A549 (cell line): ENCODE measurements at regions of chr2 and their contacts with region 1.

Region 1: GRCh38 chr2:45169339-45170190 is 160.3 kb upstream of the SIX2 start:
- DNase-seq: peak; percentile 51 to 60
- ATAC-seq: peak; percentile 77 to 79
- H3K4me3 ChIP-seq: peak overlapping the region; percentile 78
- H3K27ac ChIP-seq: peak overlapping the region; percentile 86 to 93
- H3K4me1 ChIP-seq: peaks cover 29% of the 10 kb centered on the region
- CTCF ChIP-seq: peak; percentile 18; the same call in 2 of the 3 replicates
- EP300 ChIP-seq: no peak
- POLR2A ChIP-seq: peak; percentile 29
- RAD21 ChIP-seq: peak in 1 of 2 experiments; percentile 27; a peak in 1 of 5 replicates

Region 2: DNA sequence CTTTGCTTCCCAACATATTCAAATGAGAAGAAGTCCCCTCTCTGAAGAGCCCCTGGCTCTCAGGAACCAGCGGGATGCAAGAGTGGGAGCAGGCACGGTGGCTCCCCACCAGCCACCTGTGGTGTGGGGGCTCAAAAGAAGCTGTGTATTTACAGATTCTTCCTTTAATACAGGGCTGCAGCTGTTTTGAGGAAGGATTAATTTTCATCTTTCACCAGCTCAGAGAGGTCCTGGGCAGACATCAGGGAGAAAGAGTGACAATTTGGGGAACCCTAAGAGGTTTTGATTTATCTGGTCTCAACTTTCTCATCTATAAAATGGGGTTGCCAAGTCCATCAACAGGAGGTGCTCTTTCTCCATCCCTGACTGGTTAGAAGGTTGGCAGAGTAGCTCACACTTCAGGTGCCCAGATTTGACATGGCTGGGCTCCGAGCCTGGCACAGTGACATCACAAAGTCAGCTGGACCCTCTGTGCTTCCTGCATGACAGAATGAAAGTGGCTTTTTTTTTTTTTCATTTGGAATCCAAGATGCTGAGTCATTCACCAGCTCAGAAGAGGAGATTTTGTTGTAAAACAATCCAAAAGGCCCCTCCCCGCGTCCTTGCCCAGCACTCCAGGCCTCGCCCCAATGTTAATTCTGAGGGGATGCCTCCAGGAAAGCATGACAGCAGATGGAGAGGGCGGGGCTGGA is 144.8 kb before region 1 on chr2:
- CTCF ChIA-PET with region 1: interaction called, 7 read pairs
- POLR2A ChIA-PET with region 1: interaction called, 10 read pairs
- DNase-seq: peak; percentile 72 to 89
- ATAC-seq: peak; percentile 73 to 85
- H3K4me3 ChIP-seq: no peak overlapping the region
- H3K27ac ChIP-seq: peak overlapping the region; percentile 50 to 82
- H3K4me1 ChIP-seq: peaks cover 18% of the 10 kb centered on the region
- CTCF ChIP-seq: peak; percentile 70
- EP300 ChIP-seq: no peak
- POLR2A ChIP-seq: no peak
- RAD21 ChIP-seq: peak; percentile 63 to 77

Region 3: GRCh38 chr2:45128580-45128997 is 41.0 kb before region 1 on chr2:
- CTCF ChIA-PET with region 1: interaction called, 4 read pairs
- POLR2A ChIA-PET with region 1: interaction called, 10 read pairs
- DNase-seq: peak; percentile 41 to 81
- ATAC-seq: peak; percentile 82 to 91
- H3K4me3 ChIP-seq: no peak overlapping the region
- H3K27ac ChIP-seq: peak overlapping the region; percentile 38 to 48; a peak in 3 of 6 replicates
- H3K4me1 ChIP-seq: peaks cover 18% of the 10 kb centered on the region
- CTCF ChIP-seq: peak; percentile 33; the same call in 1 of the 3 replicates
- EP300 ChIP-seq: 0 out of 5 replicates have a peak, but pooled peaks of 1 of the 2 experiments have one; percentile 11
- POLR2A ChIP-seq: no peak
- RAD21 ChIP-seq: peak; percentile 32 to 44; a peak in 2 of 5 replicates

Region 4: GRCh38 chr2:45237850-45238542 is 68.4 kb after region 1 on chr2:
- CTCF ChIA-PET with region 1: interaction called, 13 read pairs
- POLR2A ChIA-PET with region 1: interaction called, 5 read pairs
- DNase-seq: peak; percentile 74 to 84
- ATAC-seq: peak; percentile 96 to 97
- H3K4me3 ChIP-seq: no peak overlapping the region
- H3K27ac ChIP-seq: peak overlapping the region; percentile 68 to 72; a peak in 5 of 6 replicates
- H3K4me1 ChIP-seq: peaks cover 28% of the 10 kb centered on the region
- CTCF ChIP-seq: peak; percentile 27; the same call in 1 of the 3 replicates
- EP300 ChIP-seq: no peak
- POLR2A ChIP-seq: no peak
- RAD21 ChIP-seq: peak; percentile 39 to 41; a peak in 4 of 5 replicates

Region 5: DNA sequence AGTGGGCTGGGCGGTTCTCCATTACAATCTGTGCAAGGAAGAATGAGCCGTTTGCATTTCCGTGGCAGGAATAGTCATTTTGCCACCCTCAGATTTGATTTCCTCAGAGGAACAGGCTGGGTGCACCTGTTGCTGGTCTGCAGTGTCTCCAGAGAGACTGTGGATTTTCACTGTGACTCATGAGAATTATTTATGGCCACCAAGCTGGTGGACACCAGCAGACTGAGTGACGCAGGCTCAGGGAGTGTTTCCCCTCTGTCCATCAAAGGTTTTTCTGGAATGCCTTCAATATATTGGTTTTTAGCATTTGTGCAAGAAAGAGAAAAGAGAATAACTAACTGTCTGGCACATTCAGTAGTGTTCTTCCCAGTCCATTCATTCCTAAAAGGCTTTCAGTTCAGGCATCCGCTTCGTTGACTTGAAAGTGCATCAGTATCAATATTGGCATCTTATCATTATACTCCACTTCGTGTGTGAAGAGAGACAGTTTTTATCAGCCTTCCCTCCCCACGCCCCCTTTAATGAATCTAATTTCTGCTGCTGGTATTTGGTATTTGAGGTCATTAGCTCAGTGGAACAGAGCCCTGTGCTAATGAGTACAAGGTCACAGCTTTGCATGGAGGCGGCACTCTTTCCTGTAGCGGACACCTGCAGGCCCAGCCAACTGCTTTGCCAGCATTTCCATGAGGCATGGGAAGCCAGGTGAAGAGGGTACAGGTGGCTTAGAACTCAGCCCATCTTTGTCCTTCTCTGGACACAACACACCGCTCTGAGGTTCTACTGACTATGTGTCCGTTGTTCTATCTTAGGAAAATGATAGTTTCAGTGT is 521.8 kb after region 1 on chr2:
- CTCF ChIA-PET with region 1: no interaction called
- POLR2A ChIA-PET with region 1: no interaction called
- DNase-seq: no peak
- ATAC-seq: no peak
- H3K4me3 ChIP-seq: no peak overlapping the region
- H3K27ac ChIP-seq: no peak overlapping the region
- H3K4me1 ChIP-seq: no peaks in the 10 kb centered on the region
- CTCF ChIP-seq: no peak
- EP300 ChIP-seq: no peak
- POLR2A ChIP-seq: no peak
- RAD21 ChIP-seq: no peak